ENCODE measurements at regions of chr11 and their contacts with region 1.

Region 1: GRCh38 chr11:131770801-131771200 is 400.4 kb downstream of the NTM start:
- DNase-seq: no peak
- H3K4me3 ChIP-seq: no peak overlapping the region
- H3K27ac ChIP-seq: no peak overlapping the region
- H3K4me1 ChIP-seq: no peaks in the 10 kb centered on the region
- H3K27me3 ChIP-seq: no peaks in the 10 kb centered on the region
- CTCF ChIP-seq: no peak
- EP300 ChIP-seq: no peak
- POLR2A ChIP-seq: no peak

Region 2: GRCh38 chr11:131579932-131580387 is 190.8 kb before region 1 on chr11:
- intact Hi-C with region 1: no loop called
- DNase-seq: peak in 1 of 5 donors; percentile 56
- H3K4me3 ChIP-seq: no peak overlapping the region
- H3K27ac ChIP-seq: no peak overlapping the region
- H3K4me1 ChIP-seq: no peaks in the 10 kb centered on the region
- H3K27me3 ChIP-seq: no peaks in the 10 kb centered on the region
- CTCF ChIP-seq: peak in 1 of 3 donors; percentile 19
- EP300 ChIP-seq: no peak
- POLR2A ChIP-seq: no peak

Region 3: DNA sequence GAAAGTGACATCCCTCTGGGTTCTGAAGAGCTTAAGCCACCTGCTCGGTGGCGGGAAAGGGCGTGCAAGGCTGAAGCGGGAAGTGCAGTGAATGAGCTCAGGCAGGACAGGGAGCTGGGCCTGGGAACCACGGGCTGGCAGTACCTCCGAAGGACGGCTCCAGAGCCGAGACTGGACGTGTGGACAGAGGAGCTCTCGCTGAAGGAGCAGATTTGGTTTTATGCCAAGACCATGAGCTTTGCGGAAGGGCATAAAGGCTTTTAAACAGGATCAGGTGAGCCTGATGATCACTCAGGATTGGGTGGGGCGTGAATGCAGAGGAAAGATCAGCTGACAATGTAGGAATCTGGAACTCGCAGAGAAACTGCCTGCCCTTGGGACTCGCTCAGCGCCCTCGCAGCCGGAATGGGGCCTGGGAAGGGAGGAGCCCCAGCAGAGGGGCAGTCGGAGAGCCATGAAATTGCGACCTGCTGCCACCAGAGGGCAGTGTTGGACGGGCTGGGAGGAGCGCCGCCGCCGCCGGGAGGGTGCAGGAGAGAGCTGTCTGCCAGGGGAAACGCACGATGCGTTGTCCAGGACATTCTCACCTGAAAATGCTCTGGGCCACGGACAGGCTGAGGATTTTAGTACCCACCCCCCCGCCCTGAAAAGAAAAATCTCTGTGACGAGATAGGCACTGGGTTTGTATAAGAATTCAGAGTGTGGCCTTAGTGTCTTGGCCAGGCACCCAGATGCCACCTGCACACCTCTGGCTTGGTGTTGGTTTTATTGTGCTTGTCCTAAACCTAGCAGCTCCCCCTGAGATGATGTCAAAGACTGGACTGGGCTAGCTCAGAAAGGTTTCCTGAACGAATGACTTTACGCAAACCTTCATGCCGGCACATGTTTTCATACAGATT is 76.0 kb before region 1 on chr11:
- intact Hi-C with region 1: no loop called
- DNase-seq: peak; percentile 61 to 86 (median 66)
- H3K4me3 ChIP-seq: no peak overlapping the region
- H3K27ac ChIP-seq: no peak overlapping the region
- H3K4me1 ChIP-seq: peaks cover 1% of the 10 kb centered on the region
- H3K27me3 ChIP-seq: no peaks in the 10 kb centered on the region
- CTCF ChIP-seq: peak; percentile 23 to 60 (median 39)
- EP300 ChIP-seq: no peak
- POLR2A ChIP-seq: no peak

Region 4: DNA sequence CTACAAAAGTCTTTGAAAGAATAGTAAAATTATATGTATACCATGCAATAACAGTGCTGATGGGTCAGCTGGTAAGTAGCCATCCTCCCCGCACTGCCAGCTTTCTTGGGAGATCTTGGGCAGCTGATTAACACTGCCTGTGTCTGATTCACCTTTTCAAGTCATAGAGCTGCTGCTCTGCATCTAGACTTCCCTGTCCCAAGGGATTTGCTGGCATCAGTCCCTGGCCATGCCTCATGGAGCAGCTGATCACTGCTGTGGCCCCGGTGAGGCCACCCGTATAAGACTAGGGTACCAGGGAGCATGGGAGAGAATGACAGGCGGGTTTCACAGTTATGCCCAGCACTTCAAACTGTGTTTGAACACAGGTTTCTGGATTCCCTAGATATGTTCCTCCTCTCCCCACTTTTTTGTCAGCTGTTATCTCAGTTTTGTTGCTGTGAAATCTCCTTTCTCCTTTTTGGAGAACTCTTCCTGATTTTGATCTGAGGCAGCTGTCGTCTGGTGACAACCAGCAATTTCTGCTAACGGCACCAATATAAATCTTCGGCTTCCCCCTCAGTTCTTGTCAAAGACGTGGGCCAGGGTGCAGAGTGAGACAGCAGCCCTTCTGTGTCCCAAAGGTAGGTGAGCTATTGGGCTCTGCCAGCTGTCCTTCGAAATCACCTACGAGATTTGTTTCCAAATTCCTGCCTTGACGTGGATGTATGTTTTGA is 38.6 kb after region 1 on chr11:
- intact Hi-C with region 1: no loop called
- DNase-seq: no peak
- H3K4me3 ChIP-seq: no peak overlapping the region
- H3K27ac ChIP-seq: no peak overlapping the region
- H3K4me1 ChIP-seq: no peaks in the 10 kb centered on the region
- H3K27me3 ChIP-seq: no peaks in the 10 kb centered on the region
- CTCF ChIP-seq: no peak
- EP300 ChIP-seq: no peak
- POLR2A ChIP-seq: no peak

Region 5: DNA sequence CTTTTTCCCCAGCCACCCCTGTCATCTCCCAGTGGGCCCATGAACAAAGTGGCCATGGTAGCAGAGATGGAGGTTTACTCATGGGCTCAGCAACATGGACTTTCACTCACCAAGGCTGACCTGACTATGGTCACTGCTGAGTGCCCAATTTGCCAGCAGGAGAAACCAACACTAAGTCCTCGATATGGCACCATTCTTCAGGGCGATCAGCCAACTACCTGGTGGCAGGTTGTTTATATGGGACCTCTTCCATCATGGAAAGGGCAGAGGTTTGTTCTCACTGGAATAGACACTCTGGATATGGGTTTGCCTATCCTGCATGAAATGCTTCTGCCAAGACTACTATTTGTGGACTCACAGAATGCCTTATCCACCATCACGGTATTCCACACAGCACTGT is 608.7 kb after region 1 on chr11:
- intact Hi-C with region 1: loop called in 1 of 4 experiments (anchors 10 kb)
- DNase-seq: no peak
- H3K4me3 ChIP-seq: no peak overlapping the region
- H3K27ac ChIP-seq: no peak overlapping the region
- H3K4me1 ChIP-seq: no peaks in the 10 kb centered on the region
- H3K27me3 ChIP-seq: no peaks in the 10 kb centered on the region
- CTCF ChIP-seq: no peak
- EP300 ChIP-seq: no peak
- POLR2A ChIP-seq: no peak

Measured in ovary (tissue), 10 donors.